ENCODE measurements at regions of chr6 and their contacts with region 1.

Region 1: GRCh38 chr6:31546962-31547726 is at the start of gene NFKBIL1:
- DNase-seq: peak; percentile 99
- H3K4me3 ChIP-seq: peak within 1 kb of the TSS; percentile 40 to 51 (median 46)
- H3K27ac ChIP-seq: peak within 1 kb of the TSS; percentile 85 to 88 (median 86)
- H3K4me1 ChIP-seq: peaks cover 0 to 30% (median 23%) of the 10 kb centered on the region in 4 donors
- H3K27me3 ChIP-seq: no peaks in the 10 kb centered on the region
- CTCF ChIP-seq: peak in 1 of 4 experiments; percentile 32
- EP300 ChIP-seq: peak in 1 of 4 donors; percentile 83
- POLR2A ChIP-seq: peak in 1 of 2 donors; percentile 44
- total RNA-seq, gene NFKBIL1: 32.5 to 55.1 (median 36.3) TPM

Region 2: DNA sequence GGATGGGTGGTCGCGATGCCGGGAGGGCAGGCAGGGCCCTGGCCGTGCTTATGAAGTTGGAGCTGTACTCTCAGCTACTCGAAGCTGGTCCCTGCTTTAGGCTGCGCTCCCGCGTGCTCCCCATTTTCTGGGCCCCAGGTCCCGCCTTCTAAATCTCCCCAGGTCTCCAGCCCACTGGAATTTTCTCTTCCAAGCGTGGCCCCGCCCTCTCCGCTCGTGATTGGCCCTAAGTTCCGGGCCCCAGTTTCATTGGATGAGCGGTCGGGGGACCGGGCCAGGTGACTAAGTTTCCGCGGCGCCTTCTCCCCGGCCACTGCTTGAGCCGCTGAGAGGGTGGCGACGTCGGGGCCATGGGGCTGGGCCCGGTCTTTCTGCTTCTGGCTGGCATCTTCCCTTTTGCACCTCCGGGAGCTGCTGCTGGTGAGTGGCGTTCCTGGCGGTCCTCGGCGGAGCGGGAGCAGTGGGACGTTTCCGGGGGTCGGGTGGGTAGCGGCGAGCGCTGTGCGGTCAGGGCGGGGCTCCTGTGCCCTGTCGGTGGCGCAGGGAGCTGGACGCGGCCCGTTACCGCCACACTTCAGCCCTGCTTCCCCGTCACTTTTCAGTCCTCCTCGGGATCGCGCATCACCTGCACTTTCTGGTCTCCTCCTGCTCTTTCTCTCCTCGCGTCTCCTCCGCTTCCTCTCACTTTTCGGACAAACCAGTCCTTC is 143.7 kb before region 1 on chr6 and contains the start of gene MICA:
- intact Hi-C with region 1: loop called (anchors 5 kb)
- DNase-seq: peak; percentile 96
- H3K4me3 ChIP-seq: peak within 1 kb of the TSS; percentile 52 to 84 (median 64)
- H3K27ac ChIP-seq: peak within 1 kb of the TSS; percentile 97 to 100 (median 98)
- H3K4me1 ChIP-seq: peaks cover 0 to 71% (median 60%) of the 10 kb centered on the region in 4 donors
- H3K27me3 ChIP-seq: no peaks in the 10 kb centered on the region
- CTCF ChIP-seq: no peak
- EP300 ChIP-seq: no peak
- POLR2A ChIP-seq: peak; percentile 29 to 60
- total RNA-seq, gene MICA: 18.6 to 46.5 (median 27.2) TPM

Region 3: DNA sequence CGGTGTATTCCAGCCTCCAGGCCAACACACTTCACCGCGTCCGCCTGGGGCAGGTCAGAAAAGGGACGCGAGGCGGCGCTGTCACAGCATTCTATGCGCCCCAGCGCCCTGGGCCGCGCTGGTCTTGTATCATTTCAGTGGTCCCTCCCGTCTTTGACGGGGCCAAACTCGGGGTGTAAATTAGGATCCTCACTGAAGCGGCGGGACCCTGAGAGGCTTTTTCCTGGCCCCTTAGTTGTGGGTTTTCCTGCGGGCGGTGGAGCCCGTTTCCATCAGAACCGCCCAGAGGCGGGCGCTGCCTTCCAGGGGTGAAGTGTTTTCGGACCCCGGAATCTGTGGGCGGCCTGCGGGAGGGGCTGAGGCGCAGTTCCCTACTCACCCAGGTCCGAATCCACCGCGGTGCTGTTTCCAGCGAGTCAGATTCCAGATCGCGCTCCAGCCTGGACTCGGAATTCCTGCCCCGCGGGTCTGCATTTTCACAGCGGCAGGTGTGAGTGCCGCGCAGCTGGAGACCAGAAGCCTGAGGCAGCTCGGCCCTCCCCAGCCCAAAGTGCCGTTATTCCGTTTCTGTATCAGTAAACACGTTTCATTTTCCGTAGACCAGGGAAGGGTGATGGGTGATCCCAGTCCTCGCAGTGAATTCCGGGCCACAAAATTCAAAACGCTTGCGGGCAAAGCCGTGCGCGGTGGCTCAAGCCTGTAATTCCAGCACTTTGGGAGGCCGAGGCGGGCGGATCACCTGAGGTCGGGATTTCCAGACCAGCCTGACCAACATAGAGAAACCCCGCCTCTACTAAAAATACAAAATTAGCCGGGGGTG is 53.1 kb before region 1 on chr6:
- intact Hi-C with region 1: no loop called
- DNase-seq: peak; percentile 84
- H3K4me3 ChIP-seq: peak overlapping the region; percentile 27 to 52 (median 44)
- H3K27ac ChIP-seq: peak overlapping the region; percentile 37 to 76 (median 62)
- H3K4me1 ChIP-seq: peaks cover 0 to 33% (median 25%) of the 10 kb centered on the region in 4 donors
- H3K27me3 ChIP-seq: peaks cover 16 to 67% (median 37%) of the 10 kb centered on the region in 3 donors
- CTCF ChIP-seq: peak; percentile 61 to 76 (median 65)
- EP300 ChIP-seq: no peak
- POLR2A ChIP-seq: no peak

Region 4: DNA sequence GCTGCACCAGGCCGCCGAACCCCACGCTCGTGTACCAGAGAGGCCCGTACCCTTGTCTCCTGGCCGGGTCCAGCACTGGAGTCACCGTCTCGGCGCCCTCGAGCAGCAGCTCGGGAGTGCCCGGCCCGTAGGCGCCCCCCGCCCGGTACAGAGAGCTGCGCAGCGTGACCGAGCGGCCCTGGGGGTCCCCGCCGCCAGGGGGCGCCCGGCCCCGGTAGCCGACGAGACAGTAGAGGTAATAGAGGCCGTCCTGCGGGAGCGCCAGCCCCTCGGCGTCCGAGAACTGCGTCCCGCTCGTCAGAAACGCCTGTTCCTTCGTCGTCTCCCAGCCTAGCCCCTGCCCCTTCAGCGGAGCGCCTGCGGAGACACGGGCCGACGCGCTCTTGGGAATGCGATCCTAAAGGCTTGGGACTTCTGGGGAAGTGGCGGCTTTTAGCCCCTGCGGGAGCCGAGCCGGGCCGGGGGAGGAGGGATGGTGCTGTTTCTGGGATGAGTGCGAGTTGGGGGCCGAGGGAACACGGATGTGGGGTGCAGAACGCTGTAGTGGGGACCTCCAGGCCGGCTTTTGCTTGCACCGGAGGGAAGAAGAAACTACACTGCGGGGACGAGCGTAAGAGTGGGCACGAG is 33.8 kb after region 1 on chr6:
- intact Hi-C with region 1: loop called (anchors 2 kb)
- DNase-seq: peak; percentile 94
- H3K4me3 ChIP-seq: peak overlapping the region; percentile 50 to 85 (median 70)
- H3K27ac ChIP-seq: peak overlapping the region; percentile 80 to 87 (median 84)
- H3K4me1 ChIP-seq: peaks cover 0 to 21% (median 17%) of the 10 kb centered on the region in 4 donors
- H3K27me3 ChIP-seq: no peaks in the 10 kb centered on the region
- CTCF ChIP-seq: peak; percentile 86 to 96 (median 90)
- EP300 ChIP-seq: no peak
- POLR2A ChIP-seq: peak in 1 of 2 donors; percentile 33

Region 5: GRCh38 chr6:31652925-31653718 is 106.0 kb after region 1 on chr6:
- intact Hi-C with region 1: loop called (anchors 2 kb)
- DNase-seq: peak; percentile 95
- H3K4me3 ChIP-seq: peak overlapping the region; percentile 67 to 83 (median 78)
- H3K27ac ChIP-seq: peak overlapping the region; percentile 96 to 99 (median 98)
- H3K4me1 ChIP-seq: peaks cover 0 to 34% (median 26%) of the 10 kb centered on the region in 4 donors
- H3K27me3 ChIP-seq: no peaks in the 10 kb centered on the region
- CTCF ChIP-seq: no peak
- EP300 ChIP-seq: no peak
- POLR2A ChIP-seq: peak; percentile 71 to 75